Dendritic cell treated with granulocyte-macrophage colony-stimulating factor and Interleukin-4, amounts not matched to agents 40 ng/mL and 50 ng/mL, for 4 days (primary cell): ENCODE measurements at regions of chr11 and their contacts with region 1.

Region 1: DNA sequence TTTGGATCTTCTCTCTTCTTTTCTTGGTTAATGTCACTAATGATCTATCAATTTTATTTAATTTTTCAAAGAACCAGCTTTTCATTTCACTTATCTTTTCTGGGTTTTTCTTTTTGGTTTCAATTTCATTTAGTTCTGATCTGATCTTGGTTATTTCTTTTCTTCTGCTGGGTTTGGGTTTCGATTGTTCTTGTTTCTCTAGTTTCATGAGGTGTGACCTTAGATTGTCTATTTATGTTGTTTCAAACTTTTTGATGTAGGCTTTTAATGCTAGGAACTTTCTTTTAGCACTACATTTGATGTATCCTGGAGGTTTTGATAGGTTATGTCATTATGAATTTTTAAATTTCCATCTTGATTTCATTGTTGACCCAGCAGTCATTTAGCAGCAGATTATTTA is 142.3 kb downstream of the C11orf87 start:
- H3K4me3 Mint-ChIP-seq: no peak overlapping the region
- H3K27ac Mint-ChIP-seq: no peak overlapping the region
- H3K4me1 Mint-ChIP-seq: no peaks in the 10 kb centered on the region
- H3K27me3 Mint-ChIP-seq: no peaks in the 10 kb centered on the region

Region 2: GRCh38 chr11:109590782-109591181 is 26.5 kb after region 1 on chr11:
- intact Hi-C with region 1: no loop called
- H3K4me3 Mint-ChIP-seq: no peak overlapping the region
- H3K27ac Mint-ChIP-seq: no peak overlapping the region
- H3K4me1 Mint-ChIP-seq: no peaks in the 10 kb centered on the region
- H3K27me3 Mint-ChIP-seq: no peaks in the 10 kb centered on the region

Region 3: GRCh38 chr11:109629734-109630133 is 65.5 kb after region 1 on chr11:
- intact Hi-C with region 1: loop called (anchors 10 kb)
- H3K4me3 Mint-ChIP-seq: no peak overlapping the region
- H3K27ac Mint-ChIP-seq: no peak overlapping the region
- H3K4me1 Mint-ChIP-seq: no peaks in the 10 kb centered on the region
- H3K27me3 Mint-ChIP-seq: no peaks in the 10 kb centered on the region